Tibial artery (tissue), 4 donors: ENCODE measurements at regions of chr14 and their contacts with region 1.

Region 1: GRCh38 chr14:52729925-52730667 is at the start of gene STYX:
- DNase-seq: peak; percentile 99
- H3K4me3 ChIP-seq: peak within 1 kb of the TSS; percentile 89 to 98
- H3K27ac ChIP-seq: peak within 1 kb of the TSS; percentile 89 to 91
- H3K4me1 ChIP-seq: peaks cover 0 to 10% (median 5%) of the 10 kb centered on the region in 4 donors
- H3K27me3 ChIP-seq: no peaks in the 10 kb centered on the region
- CTCF ChIP-seq: peak; percentile 30 to 35

Region 2: DNA sequence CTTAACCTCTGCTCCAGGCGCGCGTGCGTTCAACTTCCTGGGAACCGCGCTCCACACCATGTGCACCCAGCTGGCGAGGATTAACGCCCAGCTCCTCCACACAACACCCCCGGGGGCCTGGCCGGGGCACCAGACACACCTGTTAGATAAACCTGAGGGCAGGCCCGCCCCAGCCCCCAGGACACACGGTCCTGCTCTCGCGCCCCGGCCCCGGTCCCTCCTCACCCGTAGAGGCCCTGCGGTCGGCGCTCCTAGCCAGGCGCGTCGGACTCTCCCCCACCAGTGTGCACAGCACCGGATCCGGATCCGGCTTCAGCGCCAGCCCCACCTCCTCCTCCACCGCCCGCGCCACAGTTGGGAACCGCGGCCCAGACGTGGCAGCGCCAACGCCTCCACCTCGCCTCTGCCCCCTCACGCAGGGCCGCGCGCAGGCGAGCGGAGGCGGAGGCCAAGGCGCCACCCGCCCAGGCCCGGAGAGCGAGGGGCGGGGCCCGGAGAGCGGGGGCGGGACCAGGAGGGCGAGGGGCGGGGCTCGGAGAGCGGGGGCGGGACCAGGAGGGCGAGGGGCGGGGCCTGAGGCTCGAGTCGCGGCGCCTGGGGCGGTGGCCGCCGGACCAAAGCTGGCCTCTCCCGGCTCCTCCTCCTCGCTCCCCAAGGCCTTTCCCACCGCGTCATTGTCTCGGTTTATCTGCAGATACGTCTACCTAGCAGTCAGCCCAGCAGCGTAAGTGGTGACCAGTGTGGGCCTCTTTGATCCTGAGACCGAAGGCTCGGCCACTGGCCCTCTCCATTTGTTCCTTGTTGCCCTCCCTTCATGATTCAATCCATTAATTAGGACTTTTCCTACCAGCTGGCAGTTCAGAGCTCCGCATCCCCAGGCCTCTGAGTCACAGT is 61.4 kb after region 1 on chr14 and contains the start of gene GNPNAT1:
- intact Hi-C with region 1: loop called (anchors 5 kb)
- DNase-seq: peak; percentile 78 to 93
- H3K4me3 ChIP-seq: peak within 1 kb of the TSS; percentile 60 to 85
- H3K27ac ChIP-seq: peak within 1 kb of the TSS; percentile 79 to 94
- H3K4me1 ChIP-seq: peaks cover 0 to 38% (median 15%) of the 10 kb centered on the region in 4 donors
- H3K27me3 ChIP-seq: no peaks in the 10 kb centered on the region
- CTCF ChIP-seq: no peak